Right ventricle myocardium inferior (tissue), 1 donor: ENCODE measurements at regions of chr3 and their contacts with region 1.

Region 1: DNA sequence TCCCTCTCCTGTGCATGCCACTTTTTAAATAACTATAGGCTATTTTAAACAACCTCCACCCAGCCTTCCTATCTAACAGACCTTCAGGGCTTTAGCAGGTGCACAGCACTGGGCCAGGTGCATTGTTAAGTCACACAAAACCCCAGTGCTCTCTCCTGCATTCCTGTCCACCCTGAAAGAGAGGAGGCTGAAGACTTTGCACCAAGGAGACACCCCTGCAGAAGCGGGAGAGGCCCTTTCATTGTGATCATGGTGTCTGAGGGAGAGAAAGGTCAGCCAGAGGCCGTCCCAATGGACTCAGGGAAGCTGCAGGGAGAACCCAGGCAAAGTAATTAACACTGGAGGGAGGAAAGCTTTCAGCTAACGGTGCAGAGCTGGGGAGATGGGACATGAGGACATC is 5.2 kb downstream of the LRIG1 start:
- DNase-seq: no peak
- ATAC-seq: no peak

Region 2: GRCh38 chr3:66483406-66483906 is 12.2 kb before region 1 on chr3:
- intact Hi-C with region 1: loop called (anchors 2 kb)
- DNase-seq: peak; percentile 72
- ATAC-seq: peak; percentile 61